ENCODE measurements at regions of chr13 and their contacts with region 1.

Region 1: GRCh38 chr13:43085545-43085944 is 62.2 kb downstream of the DNAJC15 start:
- DNase-seq: peak in 1 of 2 donors; percentile 52
- ATAC-seq: peak in 1 of 3 donors; percentile 34
- H3K4me3 ChIP-seq: no peak overlapping the region
- H3K4me3 Mint-ChIP-seq: no peak overlapping the region
- H3K27ac ChIP-seq: no peak overlapping the region
- H3K27ac Mint-ChIP-seq: peak overlapping the region in 1 of 2 donors; percentile 18
- H3K4me1 ChIP-seq: no peaks in the 10 kb centered on the region
- H3K4me1 Mint-ChIP-seq: peaks cover 18 to 22% of the 10 kb centered on the region in 2 donors
- H3K27me3 ChIP-seq: no peaks in the 10 kb centered on the region
- H3K27me3 Mint-ChIP-seq: no peaks in the 10 kb centered on the region
- CTCF ChIP-seq: peak; percentile 76

Region 2: DNA sequence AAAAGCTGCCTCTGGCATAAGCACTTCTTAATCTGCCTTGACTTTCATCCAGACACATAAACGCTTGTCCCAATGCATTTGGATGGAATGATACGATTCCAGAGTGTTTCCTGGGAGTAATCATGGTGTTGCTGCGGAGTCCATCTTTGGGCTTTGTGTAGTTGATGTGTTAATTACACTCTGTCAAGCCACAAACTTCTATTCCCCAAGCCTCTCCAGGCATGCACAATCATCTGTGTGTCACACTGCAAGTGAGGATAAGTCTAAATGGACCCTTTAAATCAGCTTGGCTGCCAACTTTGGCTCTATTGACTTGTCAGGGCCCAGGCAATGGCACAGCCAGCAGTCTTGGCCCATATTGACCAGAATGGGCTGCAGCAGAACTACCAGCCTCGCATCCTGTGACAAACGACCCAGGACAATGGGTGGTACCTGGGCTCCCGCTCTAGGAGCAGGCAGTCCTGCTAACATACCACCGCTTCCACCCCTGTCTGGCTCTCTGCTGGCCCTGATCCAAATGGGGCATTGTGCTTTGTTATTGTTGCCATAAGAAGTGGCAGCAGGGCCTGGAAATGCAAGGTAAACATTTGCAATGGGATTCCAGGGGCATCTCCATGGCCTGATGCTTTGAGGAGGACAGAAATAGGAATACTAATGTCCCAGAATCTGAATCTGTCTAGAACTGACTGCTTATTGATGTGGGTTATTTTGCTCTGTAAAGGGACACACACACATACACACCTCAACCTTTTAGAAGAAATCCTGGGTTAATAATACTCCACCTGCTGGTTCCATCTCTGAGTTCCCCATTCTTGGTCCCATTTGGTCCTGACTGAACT is 65.0 kb after region 1 on chr13:
- intact Hi-C with region 1: no loop called
- DNase-seq: no peak
- ATAC-seq: no peak
- H3K4me3 ChIP-seq: no peak overlapping the region
- H3K4me3 Mint-ChIP-seq: no peak overlapping the region
- H3K27ac ChIP-seq: no peak overlapping the region
- H3K27ac Mint-ChIP-seq: no peak overlapping the region
- H3K4me1 ChIP-seq: no peaks in the 10 kb centered on the region
- H3K4me1 Mint-ChIP-seq: no peaks in the 10 kb centered on the region
- H3K27me3 ChIP-seq: no peaks in the 10 kb centered on the region
- H3K27me3 Mint-ChIP-seq: peaks cover 16 to 30% of the 10 kb centered on the region in 2 donors
- CTCF ChIP-seq: no peak

Region 3: GRCh38 chr13:43878892-43879754 is 793.6 kb after region 1 on chr13 and contains the start of gene CCDC122:
- intact Hi-C with region 1: loop called (anchors 5 kb)
- DNase-seq: peak; percentile 81 to 88
- ATAC-seq: peak; percentile 91
- H3K4me3 ChIP-seq: peak within 1 kb of the TSS; percentile 64
- H3K4me3 Mint-ChIP-seq: peak within 1 kb of the TSS; percentile 93
- H3K27ac ChIP-seq: peak within 1 kb of the TSS; percentile 69
- H3K27ac Mint-ChIP-seq: peak within 1 kb of the TSS; percentile 83 to 97
- H3K4me1 ChIP-seq: peaks cover 12% of the 10 kb centered on the region
- H3K4me1 Mint-ChIP-seq: peaks cover 16 to 28% of the 10 kb centered on the region in 2 donors
- H3K27me3 ChIP-seq: no peaks in the 10 kb centered on the region
- H3K27me3 Mint-ChIP-seq: no peaks in the 10 kb centered on the region
- CTCF ChIP-seq: no peak
- total RNA-seq, gene CCDC122: 1.2 to 2.1 (median 1.6) TPM

Measured in natural killer cell (primary cell).